ENCODE measurements at regions of chr19 and their contacts with region 1.

Region 1: GRCh38 chr19:49817964-49818648 is at the start of gene MED25:
- DNase-seq: peak; percentile 82
- H3K27ac ChIP-seq: peak within 1 kb of the TSS; percentile 97
- CTCF ChIP-seq: no peak

Region 2: GRCh38 chr19:49213791-49214190 is 604.3 kb before region 1 on chr19:
- CTCF ChIA-PET with region 1: no interaction called
- POLR2A ChIA-PET with region 1: no interaction called
- DNase-seq: no peak
- H3K27ac ChIP-seq: no peak overlapping the region
- CTCF ChIP-seq: no peak

Region 3: GRCh38 chr19:49651029-49651825 is 166.9 kb before region 1 on chr19:
- CTCF ChIA-PET with region 1: no interaction called
- POLR2A ChIA-PET with region 1: no interaction called
- DNase-seq: no peak
- H3K27ac ChIP-seq: no peak overlapping the region
- CTCF ChIP-seq: no peak

Region 4: GRCh38 chr19:49838885-49839588 is 20.9 kb after region 1 on chr19:
- CTCF ChIA-PET with region 1: interaction called, 3 read pairs
- POLR2A ChIA-PET with region 1: interaction called, 10 read pairs
- DNase-seq: no peak
- H3K27ac ChIP-seq: no peak overlapping the region
- CTCF ChIP-seq: no peak

Region 5: DNA sequence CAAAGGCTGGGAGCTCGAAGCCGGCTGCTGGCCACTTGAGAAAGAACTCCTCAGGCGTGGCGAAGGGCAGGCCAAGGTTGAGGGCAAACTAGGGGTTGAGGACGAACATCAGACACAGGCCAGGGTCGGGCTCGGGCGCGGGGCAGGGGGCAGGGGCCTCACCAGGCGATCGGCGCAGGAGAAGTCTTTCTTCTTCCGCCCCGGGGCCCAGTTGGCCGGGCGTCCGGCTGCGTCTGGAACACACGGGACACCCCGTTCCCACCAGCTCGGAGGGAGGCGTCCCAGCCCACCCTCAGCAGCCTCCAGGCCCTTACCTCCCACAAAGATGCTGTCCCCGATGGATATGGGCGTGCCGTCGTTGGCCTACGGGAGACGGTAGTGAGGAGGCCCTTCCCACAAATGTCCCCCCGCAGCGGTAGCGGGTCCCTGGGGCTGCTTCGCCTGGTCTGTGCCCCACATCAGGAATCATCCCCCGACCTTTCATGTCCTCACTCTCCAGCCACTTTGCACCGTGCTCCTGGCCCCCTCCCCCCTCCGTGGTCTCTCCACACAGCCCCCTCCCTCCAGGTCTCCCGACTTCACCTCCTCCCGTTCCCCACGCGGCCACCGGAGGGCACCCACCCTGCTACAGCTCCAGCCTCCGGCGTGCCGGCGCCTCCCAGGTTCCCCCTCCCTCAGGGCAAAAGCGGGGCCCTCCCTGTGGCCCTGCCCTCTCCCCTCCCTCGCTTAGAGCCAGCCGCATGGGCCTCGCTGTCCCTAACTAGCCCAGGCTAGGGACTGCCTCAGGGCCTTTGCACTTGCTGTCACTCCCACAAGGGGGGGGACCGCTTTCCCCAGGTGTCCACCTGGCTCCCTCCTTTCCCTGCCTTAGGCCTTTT is 44.5 kb after region 1 on chr19:
- CTCF ChIA-PET with region 1: interaction called, 3 read pairs
- POLR2A ChIA-PET with region 1: interaction called, 10 read pairs
- DNase-seq: no peak
- H3K27ac ChIP-seq: peak overlapping the region; percentile 71
- CTCF ChIP-seq: no peak